Posterior vena cava (tissue), 2 donors: ENCODE measurements at regions of chr15 and their contacts with region 1.

Region 1: DNA sequence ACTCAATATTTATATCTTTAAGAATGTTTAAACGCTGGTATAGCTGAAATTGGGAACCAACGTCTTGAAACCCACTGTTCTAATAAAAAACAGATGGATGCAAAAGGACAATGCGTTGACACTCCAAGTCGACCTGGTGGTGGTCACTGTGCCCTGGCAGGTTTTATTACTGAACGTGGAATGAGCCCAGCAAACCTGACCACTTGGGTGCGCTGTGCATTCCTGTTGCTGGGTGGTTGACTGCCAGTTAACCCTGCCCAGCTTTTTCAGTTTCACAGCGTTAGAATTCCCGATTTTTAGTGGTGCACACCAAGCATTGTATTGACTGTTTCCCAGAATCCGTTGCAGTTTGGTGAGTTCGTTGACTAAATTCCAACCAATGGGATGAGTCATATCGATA is 384.4 kb downstream of the OCA2 start:
- DNase-seq: no peak

Region 2: DNA sequence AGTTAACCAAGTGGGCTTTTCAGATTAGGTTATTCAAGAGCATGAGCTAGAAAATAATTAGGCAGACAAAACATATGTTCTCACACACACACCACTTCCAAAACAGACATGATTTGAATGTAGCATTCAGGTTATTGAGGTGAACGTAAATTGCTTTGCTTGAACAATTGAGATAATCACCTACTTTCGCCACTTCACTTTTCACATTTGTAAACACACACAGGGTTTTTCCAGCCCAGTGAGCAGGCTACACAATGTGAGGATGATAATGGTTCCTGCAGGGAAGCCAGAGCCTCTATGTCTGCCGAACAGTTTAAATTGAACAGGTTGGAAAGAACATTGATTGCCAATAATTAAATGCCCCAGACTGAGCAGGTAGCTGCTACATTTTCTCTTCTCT is 176.3 kb before region 1 on chr15:
- intact Hi-C with region 1: loop called in 1 of 2 experiments (anchors 10 kb)
- DNase-seq: no peak

Region 3: GRCh38 chr15:27844018-27844666 is 129.5 kb after region 1 on chr15:
- intact Hi-C with region 1: no loop called
- DNase-seq: peak; percentile 71

Region 4: GRCh38 chr15:27937851-27938250 is 223.2 kb after region 1 on chr15:
- intact Hi-C with region 1: no loop called
- DNase-seq: no peak